ENCODE measurements at regions of chr12 and their contacts with region 1.

Region 1: GRCh38 chr12:57111031-57111734 is at the start of gene STAT6:
- DNase-seq: peak; percentile 84
- H3K4me3 Mint-ChIP-seq: peak within 1 kb of the TSS; percentile 99
- H3K27ac Mint-ChIP-seq: peak within 1 kb of the TSS; percentile 98
- H3K4me1 Mint-ChIP-seq: peaks cover 51% of the 10 kb centered on the region
- H3K27me3 Mint-ChIP-seq: no peaks in the 10 kb centered on the region
- total RNA-seq, gene STAT6: 306 and 318 TPM in 2 replicates

Region 2: GRCh38 chr12:56630160-56630632 is 481.0 kb before region 1 on chr12 and contains the start of gene BAZ2A:
- intact Hi-C with region 1: loop called (anchors 2 kb)
- DNase-seq: peak; percentile 85
- H3K4me3 Mint-ChIP-seq: peak within 1 kb of the TSS; percentile 97
- H3K27ac Mint-ChIP-seq: peak within 1 kb of the TSS; percentile 89
- H3K4me1 Mint-ChIP-seq: peaks cover 72% of the 10 kb centered on the region
- H3K27me3 Mint-ChIP-seq: no peaks in the 10 kb centered on the region
- total RNA-seq, gene BAZ2A: 119 and 126 TPM in 2 replicates

Region 3: DNA sequence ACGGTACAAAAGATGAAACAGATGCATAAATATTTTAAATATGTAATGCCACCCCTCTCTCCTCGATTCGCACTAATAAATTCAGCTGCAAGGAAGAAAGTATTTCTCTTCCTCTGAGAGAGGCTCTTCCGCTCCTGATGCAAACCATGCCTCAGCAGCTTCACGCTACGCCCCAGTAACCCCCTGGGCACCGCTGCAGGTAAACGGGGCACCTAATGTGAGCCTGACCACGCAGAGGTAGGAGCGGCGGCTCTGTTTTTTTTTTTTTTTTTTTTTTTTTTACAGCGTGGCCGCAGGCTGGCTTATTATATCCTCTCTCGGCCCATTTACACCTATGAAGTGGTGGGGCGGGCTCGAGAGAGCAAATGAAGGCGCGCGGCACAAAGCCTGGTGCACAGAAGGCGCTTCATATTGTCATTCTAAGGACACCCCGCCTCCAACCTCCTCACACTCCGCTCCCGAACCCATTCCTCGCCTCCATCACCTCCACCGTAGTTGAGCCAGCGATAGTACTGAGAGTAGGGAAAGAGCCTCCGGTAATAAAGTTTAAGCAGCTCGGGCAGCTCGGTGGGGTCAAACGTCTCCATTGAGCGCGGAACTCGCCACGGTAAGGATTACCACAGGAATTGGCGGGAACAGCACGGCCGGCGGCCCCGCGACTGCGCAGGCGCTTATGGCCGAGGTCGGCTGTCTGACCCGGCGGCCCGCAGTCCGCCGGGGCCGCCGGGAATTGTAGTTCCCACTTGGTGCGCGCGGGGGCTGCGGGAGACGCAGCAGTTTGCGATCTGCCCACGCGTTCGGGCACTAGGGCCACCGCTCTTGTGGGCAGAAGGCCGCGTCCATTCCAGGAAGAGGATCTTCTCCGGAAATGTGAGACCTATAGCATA is 359.2 kb before region 1 on chr12 and contains the start of gene PRIM1:
- intact Hi-C with region 1: loop called (anchors 1 kb)
- DNase-seq: peak; percentile 85
- H3K4me3 Mint-ChIP-seq: peak within 1 kb of the TSS; percentile 99
- H3K27ac Mint-ChIP-seq: peak within 1 kb of the TSS; percentile 99
- H3K4me1 Mint-ChIP-seq: peaks cover 45% of the 10 kb centered on the region
- H3K27me3 Mint-ChIP-seq: no peaks in the 10 kb centered on the region
- total RNA-seq, gene PRIM1: 67.5 and 67.8 TPM in 2 replicates

Region 4: GRCh38 chr12:57063991-57064685 is 47.0 kb before region 1 on chr12:
- intact Hi-C with region 1: loop called (anchors 1 kb)
- DNase-seq: peak; percentile 57
- H3K4me3 Mint-ChIP-seq: peak overlapping the region; percentile 82
- H3K27ac Mint-ChIP-seq: peak overlapping the region; percentile 94
- H3K4me1 Mint-ChIP-seq: peaks cover 54% of the 10 kb centered on the region
- H3K27me3 Mint-ChIP-seq: no peaks in the 10 kb centered on the region

Region 5: GRCh38 chr12:57078519-57079404 is 32.4 kb before region 1 on chr12 and contains the start of gene NEMP1:
- intact Hi-C with region 1: loop called (anchors 1 kb)
- DNase-seq: peak; percentile 97
- H3K4me3 Mint-ChIP-seq: peak within 1 kb of the TSS; percentile 89
- H3K27ac Mint-ChIP-seq: peak within 1 kb of the TSS; percentile 92
- H3K4me1 Mint-ChIP-seq: peaks cover 16% of the 10 kb centered on the region
- H3K27me3 Mint-ChIP-seq: no peaks in the 10 kb centered on the region
- total RNA-seq, gene NEMP1: 70.2 and 71.7 TPM in 2 replicates

Region 6: GRCh38 chr12:57124259-57124877 is 13.2 kb after region 1 on chr12:
- intact Hi-C with region 1: loop called (anchors 1 kb)
- DNase-seq: peak; percentile 62
- H3K4me3 Mint-ChIP-seq: no peak overlapping the region
- H3K27ac Mint-ChIP-seq: no peak overlapping the region
- H3K4me1 Mint-ChIP-seq: peaks cover 17% of the 10 kb centered on the region
- H3K27me3 Mint-ChIP-seq: peaks cover 36% of the 10 kb centered on the region

Region 7: DNA sequence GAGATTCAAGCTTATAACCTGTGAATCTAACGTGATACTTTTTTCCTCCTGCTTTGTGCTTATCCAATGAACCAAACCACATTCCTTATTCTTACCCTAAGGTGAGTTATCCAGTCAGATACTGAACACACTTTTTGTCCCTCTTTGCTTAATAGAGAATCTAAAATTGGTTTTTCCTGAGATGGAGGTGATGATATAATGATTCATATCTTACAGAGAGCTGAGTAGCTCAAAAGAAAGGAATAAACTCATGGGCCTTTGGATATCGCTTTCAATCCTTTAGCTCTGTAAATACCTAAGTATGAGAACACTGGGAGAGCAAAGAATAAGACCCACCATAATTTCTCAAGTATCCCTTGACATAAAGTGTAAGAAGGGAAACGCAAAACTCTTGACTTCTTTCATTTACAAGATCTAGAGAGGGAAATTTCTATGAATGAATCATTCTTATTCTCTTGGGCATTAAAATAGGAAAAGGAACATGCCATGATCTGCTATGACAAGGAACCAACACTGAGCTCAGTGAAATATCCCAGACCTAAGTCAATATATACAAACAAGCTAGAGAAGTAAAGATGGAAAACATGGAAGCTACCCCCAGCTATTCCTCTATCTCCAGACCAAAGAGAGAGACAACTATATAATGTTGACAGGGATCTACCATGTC is 221.6 kb after region 1 on chr12:
- intact Hi-C with region 1: no loop called
- DNase-seq: no peak
- H3K4me3 Mint-ChIP-seq: no peak overlapping the region
- H3K27ac Mint-ChIP-seq: no peak overlapping the region
- H3K4me1 Mint-ChIP-seq: no peaks in the 10 kb centered on the region
- H3K27me3 Mint-ChIP-seq: no peaks in the 10 kb centered on the region

Measured in activated T-helper 1 cell treated with anti-CD3 and anti-CD28 coated beads, Interleukin-12 subunit alpha, Interleukin-12 subunit beta, Interleukin-2, Interleukin-4 antibody, amounts not matched to agents 30 ng/mL and 10 ng/mL and 1 ng/mL, durations not matched to agents 14 hours and 24 hours and 36 hours (primary cell).